ENCODE measurements at regions of chr5 and their contacts with region 1.

Region 1: GRCh38 chr5:96934708-96935558 is 947 bp upstream of the LNPEP start:
- DNase-seq: peak; percentile 85 to 98 (median 95)
- ATAC-seq: peak; percentile 69 to 72
- H3K4me3 Mint-ChIP-seq: peak overlapping the region; percentile 89 to 98 (median 94)
- H3K27ac Mint-ChIP-seq: peak overlapping the region; percentile 95 to 99 (median 96)
- H3K4me1 Mint-ChIP-seq: peaks cover 43 to 71% (median 61%) of the 10 kb centered on the region in 4 donors
- H3K27me3 Mint-ChIP-seq: no peaks in the 10 kb centered on the region

Region 2: GRCh38 chr5:96807075-96807654 is 127.8 kb before region 1 on chr5:
- POLR2A ChIA-PET with region 1: interaction called, 47 read pairs
- DNase-seq: peak in 5 of 10 donors; percentile 7 to 53 (median 44)
- ATAC-seq: peak; percentile 6 to 21
- H3K4me3 Mint-ChIP-seq: peak overlapping the region; percentile 93 to 99 (median 96)
- H3K27ac Mint-ChIP-seq: peak overlapping the region; percentile 98 to 100 (median 99)
- H3K4me1 Mint-ChIP-seq: peaks cover 43 to 87% (median 83%) of the 10 kb centered on the region in 4 donors
- H3K27me3 Mint-ChIP-seq: peaks cover 0 to 6% (median 0%) of the 10 kb centered on the region in 5 donors

Region 3: GRCh38 chr5:96876292-96876850 is 58.6 kb before region 1 on chr5 and contains the start of gene ERAP2:
- POLR2A ChIA-PET with region 1: interaction called, 28 read pairs
- DNase-seq: peak in 5 of 10 donors; percentile 7 to 72 (median 66)
- ATAC-seq: peak; percentile 77 to 82
- H3K4me3 Mint-ChIP-seq: peak within 1 kb of the TSS; percentile 77 to 99 (median 96)
- H3K27ac Mint-ChIP-seq: peak within 1 kb of the TSS; percentile 91 to 99 (median 97)
- H3K4me1 Mint-ChIP-seq: peaks cover 43 to 84% (median 63%) of the 10 kb centered on the region in 4 donors
- H3K27me3 Mint-ChIP-seq: no peaks in the 10 kb centered on the region
- polyA plus RNA-seq, gene ERAP2: 6.4 to 126 (median 6.6) TPM

Region 4: DNA sequence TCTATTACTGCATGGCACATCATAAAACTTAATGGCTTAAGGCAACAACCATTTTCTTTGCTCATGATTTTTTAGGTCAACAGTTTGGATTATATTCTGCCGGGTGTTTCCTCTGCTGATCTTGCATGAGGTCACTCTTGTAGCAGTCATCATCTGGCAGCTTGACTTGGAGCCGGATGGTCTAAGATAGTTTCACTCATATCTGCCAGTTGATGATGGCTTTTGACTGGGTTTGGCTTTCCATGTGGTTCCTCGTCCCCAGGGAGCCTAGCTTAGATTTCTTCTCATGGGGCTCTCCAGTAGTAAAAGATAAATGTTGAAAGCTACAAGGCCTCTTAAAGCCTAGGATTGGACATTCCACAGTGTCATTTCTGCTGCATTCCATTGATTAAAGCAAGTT is 28.3 kb after region 1 on chr5:
- POLR2A ChIA-PET with region 1: interaction called, 30 read pairs
- DNase-seq: no peak
- ATAC-seq: peak; percentile 25 to 26
- H3K4me3 Mint-ChIP-seq: peak overlapping the region; percentile 66 to 89 (median 81)
- H3K27ac Mint-ChIP-seq: peak overlapping the region; percentile 89 to 98 (median 94)
- H3K4me1 Mint-ChIP-seq: peaks cover 23 to 90% (median 68%) of the 10 kb centered on the region in 4 donors
- H3K27me3 Mint-ChIP-seq: no peaks in the 10 kb centered on the region

Region 5: GRCh38 chr5:96997265-96997859 is 62.4 kb after region 1 on chr5:
- POLR2A ChIA-PET with region 1: interaction called, 10 read pairs
- DNase-seq: peak in 4 of 10 donors; percentile 17 to 34 (median 26)
- ATAC-seq: peak; percentile 71
- H3K4me3 Mint-ChIP-seq: no peak overlapping the region
- H3K27ac Mint-ChIP-seq: peak overlapping the region in 3 of 10 donors; percentile 15 to 34 (median 19)
- H3K4me1 Mint-ChIP-seq: peaks cover 13 to 47% (median 33%) of the 10 kb centered on the region in 4 donors
- H3K27me3 Mint-ChIP-seq: no peaks in the 10 kb centered on the region

Region 6: DNA sequence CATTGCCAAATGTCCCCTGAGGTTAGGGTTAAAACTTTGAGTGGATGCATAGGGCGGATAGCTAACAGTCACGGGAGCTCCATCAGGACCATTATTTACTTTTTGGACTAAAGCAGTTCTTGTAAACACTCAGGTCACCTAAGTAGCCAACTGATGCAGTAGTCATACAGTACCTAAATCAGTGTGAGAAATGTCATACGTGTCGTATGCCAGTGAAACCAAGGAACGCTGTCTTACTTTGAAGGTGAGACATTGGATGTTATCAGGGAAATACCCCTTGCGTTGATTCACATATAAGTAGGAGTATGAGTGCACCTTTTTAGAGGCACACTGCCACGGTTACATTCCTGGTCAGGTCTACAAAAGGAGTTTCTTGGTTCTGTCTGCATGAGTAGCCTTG is 102.9 kb after region 1 on chr5:
- POLR2A ChIA-PET with region 1: no interaction called
- DNase-seq: no peak
- ATAC-seq: no peak
- H3K4me3 Mint-ChIP-seq: no peak overlapping the region
- H3K27ac Mint-ChIP-seq: peak overlapping the region in 4 of 10 donors; percentile 24 to 70 (median 54)
- H3K4me1 Mint-ChIP-seq: peaks cover 0 to 15% (median 4%) of the 10 kb centered on the region in 4 donors
- H3K27me3 Mint-ChIP-seq: no peaks in the 10 kb centered on the region